Calu3 (cell line): ENCODE measurements at regions of chr1 and their contacts with region 1.

Region 1: GRCh38 chr1:29341936-29342335 is 105.6 kb downstream of the PTPRU start:
- DNase-seq: no peak
- H3K4me3 Mint-ChIP-seq: no peak overlapping the region
- H3K27ac Mint-ChIP-seq: no peak overlapping the region
- H3K4me1 Mint-ChIP-seq: no peaks in the 10 kb centered on the region
- H3K27me3 Mint-ChIP-seq: peaks cover 90% of the 10 kb centered on the region
- CTCF ChIP-seq: no peak

Region 2: DNA sequence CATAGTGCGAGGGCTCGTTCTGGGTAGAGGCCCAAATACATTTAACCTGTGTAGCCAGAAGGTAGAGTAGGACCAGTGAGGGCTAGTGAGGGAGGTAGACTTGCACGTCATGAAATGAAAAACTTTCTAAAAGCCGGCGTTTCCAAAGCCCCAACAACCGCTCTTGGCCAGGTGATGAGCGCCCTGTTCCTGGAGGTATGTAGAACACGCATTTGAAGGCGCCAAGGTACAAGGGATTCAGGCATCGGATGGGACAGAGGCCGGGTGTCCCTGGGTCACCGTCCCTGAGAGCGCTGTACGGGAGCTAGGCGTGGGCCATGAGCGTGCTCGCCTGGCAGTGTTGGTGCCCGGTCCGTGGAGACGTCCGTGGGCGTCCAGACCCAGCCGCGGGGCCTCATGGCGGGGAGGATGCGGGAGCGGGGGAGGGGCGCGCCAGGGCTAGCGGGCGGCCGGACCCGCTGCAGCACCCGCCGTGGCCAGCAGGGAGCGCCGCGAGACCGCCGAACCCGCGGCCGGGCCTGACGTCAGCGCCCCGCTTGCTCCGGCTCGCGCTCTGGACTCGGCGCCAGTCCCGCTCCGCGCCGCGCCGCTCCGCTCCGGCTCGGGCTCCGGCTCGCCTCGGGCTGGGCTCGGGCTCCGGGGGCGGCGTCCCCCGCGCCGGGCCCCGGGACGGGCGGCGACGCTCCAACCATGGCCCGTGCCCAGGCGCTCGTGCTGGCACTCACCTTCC is 105.8 kb before region 1 on chr1 and contains the start of gene PTPRU:
- CTCF ChIA-PET with region 1: no interaction called
- intact Hi-C with region 1: loop called (anchors 5 kb)
- DNase-seq: peak; percentile 92
- H3K4me3 Mint-ChIP-seq: peak within 1 kb of the TSS; percentile 97
- H3K27ac Mint-ChIP-seq: peak within 1 kb of the TSS; percentile 91
- H3K4me1 Mint-ChIP-seq: peaks cover 36% of the 10 kb centered on the region
- H3K27me3 Mint-ChIP-seq: peaks cover 21% of the 10 kb centered on the region
- CTCF ChIP-seq: peak; percentile 84
- total RNA-seq, gene PTPRU: 37.9 and 54.5 TPM in 2 replicates